Activated CD4-positive, alpha-beta T cell treated with anti-CD3 and anti-CD28 coated beads for 36 hours (primary cell): ENCODE measurements at regions of chr3 and their contacts with region 1.

Region 1: GRCh38 chr3:170414202-170414663 is 4.4 kb upstream of the CLDN11 start:
- DNase-seq: peak; percentile 58
- ATAC-seq: peak; percentile 53
- H3K4me3 Mint-ChIP-seq: no peak overlapping the region
- H3K27ac Mint-ChIP-seq: no peak overlapping the region
- H3K4me1 Mint-ChIP-seq: peaks cover 5% of the 10 kb centered on the region
- H3K27me3 Mint-ChIP-seq: peaks cover 19% of the 10 kb centered on the region

Region 2: DNA sequence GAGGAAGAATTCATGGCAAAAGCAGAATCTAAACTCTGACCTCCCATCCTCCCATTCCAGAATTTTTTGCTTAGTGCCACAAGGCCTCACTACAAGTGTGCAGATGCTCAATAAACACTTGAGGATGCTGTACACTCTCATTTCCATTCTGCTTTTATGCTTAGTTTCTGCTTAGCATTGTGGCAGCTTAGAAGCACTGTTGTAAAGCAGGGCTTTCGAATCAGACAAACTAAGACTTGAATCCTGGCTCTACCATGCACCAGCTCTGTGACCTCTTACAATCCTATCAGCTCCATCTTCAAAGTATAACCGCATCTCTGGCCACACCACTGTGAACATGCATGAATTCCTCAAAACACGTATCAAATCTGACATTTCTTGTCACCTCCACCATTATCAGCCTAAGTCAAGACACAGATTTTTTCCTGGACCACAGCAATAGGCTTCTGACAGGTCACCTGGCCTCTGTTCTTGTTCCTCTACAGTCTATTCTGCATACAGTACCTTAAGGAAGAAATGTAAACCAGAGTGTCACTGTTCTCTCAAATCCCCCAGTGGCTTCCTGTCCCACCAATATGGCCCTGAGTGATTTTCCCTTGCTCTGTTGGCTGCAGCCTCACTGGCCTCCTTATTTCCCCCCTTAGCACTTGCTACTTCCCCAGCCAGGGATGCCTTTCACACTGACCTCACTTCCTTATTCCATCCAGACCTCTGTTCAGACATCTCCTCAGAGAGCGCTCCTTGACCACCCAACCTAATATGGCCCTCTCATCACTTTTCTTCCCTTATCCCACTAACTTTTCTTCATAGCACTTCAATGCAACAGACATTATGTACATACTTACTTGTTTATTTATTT is 224.6 kb before region 1 on chr3:
- CTCF ChIA-PET with region 1: interaction called, 5 read pairs
- POLR2A ChIA-PET with region 1: no interaction called
- intact Hi-C with region 1: loop called in 1 of 2 experiments (anchors 2 kb)
- DNase-seq: no peak
- ATAC-seq: peak; percentile 17
- H3K4me3 Mint-ChIP-seq: no peak overlapping the region
- H3K27ac Mint-ChIP-seq: no peak overlapping the region
- H3K4me1 Mint-ChIP-seq: peaks cover 7% of the 10 kb centered on the region
- H3K27me3 Mint-ChIP-seq: no peaks in the 10 kb centered on the region

Region 3: GRCh38 chr3:170397579-170398177 is 16.6 kb before region 1 on chr3:
- CTCF ChIA-PET with region 1: interaction called, 17 read pairs
- POLR2A ChIA-PET with region 1: no interaction called
- intact Hi-C with region 1: no loop called
- DNase-seq: no peak
- ATAC-seq: no peak
- H3K4me3 Mint-ChIP-seq: no peak overlapping the region
- H3K27ac Mint-ChIP-seq: no peak overlapping the region
- H3K4me1 Mint-ChIP-seq: peaks cover 1% of the 10 kb centered on the region
- H3K27me3 Mint-ChIP-seq: no peaks in the 10 kb centered on the region

Region 4: DNA sequence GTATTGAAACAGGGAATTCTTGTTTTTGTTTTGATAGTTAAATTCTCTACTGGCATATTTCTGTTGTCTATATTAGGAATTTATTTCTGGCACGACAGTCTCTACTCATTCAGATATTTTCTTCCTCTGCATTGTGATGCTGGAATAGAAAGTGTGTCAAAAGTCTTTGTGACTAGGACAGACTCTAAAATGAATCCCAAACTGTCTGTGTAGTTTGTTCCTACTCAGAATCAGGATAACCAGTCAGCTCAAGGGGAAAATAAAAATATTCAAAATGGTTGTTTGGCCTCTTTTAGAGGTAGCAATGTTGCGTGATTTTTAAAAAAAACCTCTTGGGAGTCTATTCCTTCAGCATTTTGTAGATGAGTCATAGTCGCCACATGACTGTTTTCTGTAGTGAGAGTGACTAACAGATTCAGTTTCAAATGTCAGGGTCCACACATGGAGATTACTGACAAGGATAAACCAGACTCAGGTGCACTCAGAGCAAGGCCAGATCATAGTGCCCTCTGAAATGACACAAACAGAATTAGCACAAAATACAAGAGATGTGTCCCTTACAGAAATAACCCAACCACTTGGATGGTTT is 158.5 kb after region 1 on chr3:
- CTCF ChIA-PET with region 1: no interaction called
- POLR2A ChIA-PET with region 1: no interaction called
- intact Hi-C with region 1: loop called in 1 of 2 experiments (anchors 5 kb)
- DNase-seq: peak; percentile 32
- ATAC-seq: peak; percentile 97
- H3K4me3 Mint-ChIP-seq: no peak overlapping the region
- H3K27ac Mint-ChIP-seq: no peak overlapping the region
- H3K4me1 Mint-ChIP-seq: peaks cover 25% of the 10 kb centered on the region
- H3K27me3 Mint-ChIP-seq: peaks cover 34% of the 10 kb centered on the region

Region 5: GRCh38 chr3:170811928-170812591 is 397.8 kb after region 1 on chr3:
- CTCF ChIA-PET with region 1: interaction called, 81 read pairs
- POLR2A ChIA-PET with region 1: no interaction called
- intact Hi-C with region 1: loop called (anchors 1 kb)
- DNase-seq: peak; percentile 77
- ATAC-seq: peak; percentile 88
- H3K4me3 Mint-ChIP-seq: no peak overlapping the region
- H3K27ac Mint-ChIP-seq: no peak overlapping the region
- H3K4me1 Mint-ChIP-seq: peaks cover 4% of the 10 kb centered on the region
- H3K27me3 Mint-ChIP-seq: no peaks in the 10 kb centered on the region